ENCODE measurements at regions of chrX and their contacts with region 1.

Region 1: GRCh38 chrX:134460005-134460861 is at the start of gene HPRT1:
- DNase-seq: peak; percentile 87
- ATAC-seq: peak; percentile 95
- H3K4me3 Mint-ChIP-seq: peak within 1 kb of the TSS; percentile 86
- H3K27ac Mint-ChIP-seq: peak within 1 kb of the TSS; percentile 87
- H3K4me1 Mint-ChIP-seq: peaks cover 8% of the 10 kb centered on the region
- H3K27me3 Mint-ChIP-seq: no peaks in the 10 kb centered on the region
- total RNA-seq, gene HPRT1: 78.0 to 126 TPM

Region 2: GRCh38 chrX:134171661-134172587 is 288.3 kb before region 1 on chrX:
- CTCF ChIA-PET with region 1: no interaction called
- POLR2A ChIA-PET with region 1: no interaction called
- intact Hi-C with region 1: loop called in 1 of 2 experiments (anchors 5 kb)
- DNase-seq: peak; percentile 70
- ATAC-seq: peak; percentile 61
- H3K4me3 Mint-ChIP-seq: peak overlapping the region; percentile 82
- H3K27ac Mint-ChIP-seq: peak overlapping the region; percentile 89
- H3K4me1 Mint-ChIP-seq: peaks cover 17% of the 10 kb centered on the region
- H3K27me3 Mint-ChIP-seq: peaks cover 10% of the 10 kb centered on the region

Region 3: GRCh38 chrX:134324359-134324758 is 135.9 kb before region 1 on chrX:
- CTCF ChIA-PET with region 1: no interaction called
- POLR2A ChIA-PET with region 1: no interaction called
- intact Hi-C with region 1: no loop called
- DNase-seq: no peak
- ATAC-seq: no peak
- H3K4me3 Mint-ChIP-seq: no peak overlapping the region
- H3K27ac Mint-ChIP-seq: no peak overlapping the region
- H3K4me1 Mint-ChIP-seq: no peaks in the 10 kb centered on the region
- H3K27me3 Mint-ChIP-seq: peaks cover 2% of the 10 kb centered on the region

Region 4: DNA sequence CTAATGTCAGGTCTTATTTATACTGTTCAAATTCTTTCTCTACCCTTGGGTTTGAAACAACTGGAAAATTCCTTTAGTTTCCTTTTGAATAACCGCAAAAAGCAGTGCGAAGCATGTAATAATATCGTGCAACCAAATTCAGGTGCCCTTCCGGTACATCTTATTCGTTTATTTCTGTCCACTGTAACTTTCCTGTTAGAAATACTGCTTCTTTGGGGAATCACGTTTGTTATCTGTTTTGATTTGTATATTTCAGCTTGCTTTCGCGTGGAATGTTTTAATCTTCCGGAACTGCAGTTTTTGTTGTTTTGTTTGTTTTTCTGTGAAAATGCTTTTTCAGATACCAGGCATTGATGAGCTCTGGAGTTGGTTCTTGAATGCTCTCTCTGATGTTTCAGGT is 85.9 kb before region 1 on chrX:
- CTCF ChIA-PET with region 1: no interaction called
- POLR2A ChIA-PET with region 1: no interaction called
- intact Hi-C with region 1: loop called in 1 of 2 experiments (anchors 2 kb)
- DNase-seq: no peak
- ATAC-seq: no peak
- H3K4me3 Mint-ChIP-seq: peak overlapping the region; percentile 96
- H3K27ac Mint-ChIP-seq: peak overlapping the region; percentile 98
- H3K4me1 Mint-ChIP-seq: peaks cover 14% of the 10 kb centered on the region
- H3K27me3 Mint-ChIP-seq: no peaks in the 10 kb centered on the region